Breast epithelium (tissue), 4 donors: ENCODE measurements at regions of chr1 and their contacts with region 1.

Region 1: GRCh38 chr1:175690298-175690697 is 53.1 kb downstream of the TNR start:
- DNase-seq: no peak
- H3K4me3 ChIP-seq: no peak overlapping the region
- H3K27ac ChIP-seq: no peak overlapping the region
- H3K4me1 ChIP-seq: no peaks in the 10 kb centered on the region
- H3K27me3 ChIP-seq: no peaks in the 10 kb centered on the region
- CTCF ChIP-seq: no peak
- POLR2A ChIP-seq: no peak

Region 2: DNA sequence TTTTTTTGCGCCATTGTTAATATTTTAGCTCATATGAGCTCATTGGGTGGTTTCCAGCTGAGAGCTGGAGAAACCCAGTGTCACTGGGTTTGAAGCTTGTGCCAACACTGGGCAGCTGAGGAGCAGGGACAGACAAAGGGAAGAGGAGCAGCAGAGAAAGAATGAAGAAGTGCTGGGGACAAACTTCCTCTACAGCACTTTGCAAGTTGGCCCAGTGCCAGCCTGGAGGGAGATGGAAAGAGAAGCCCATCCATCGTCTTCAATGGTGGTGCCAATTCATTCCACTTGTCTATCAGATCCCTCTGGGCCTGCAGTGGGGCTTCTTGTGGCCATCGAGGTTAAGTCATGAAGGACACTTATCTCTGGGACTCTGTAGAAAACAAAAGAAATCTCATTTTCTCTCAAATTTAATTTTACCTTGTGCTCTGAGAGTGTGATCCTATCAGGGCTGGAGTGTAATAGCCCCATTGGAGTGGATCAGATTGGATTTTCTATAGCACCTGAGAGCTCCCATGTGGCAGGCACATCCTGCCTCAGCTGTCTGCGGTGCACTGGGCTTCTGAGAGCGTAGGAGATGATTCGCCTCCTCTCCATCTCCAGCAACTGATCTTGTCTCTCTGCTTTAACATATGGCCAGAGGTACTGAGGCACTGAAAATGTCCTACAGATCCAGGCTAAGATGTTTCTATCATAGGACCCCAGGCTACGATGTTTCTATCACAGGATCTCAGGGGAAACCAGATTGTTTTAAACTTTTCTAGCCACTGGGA is 61.6 kb before region 1 on chr1:
- intact Hi-C with region 1: loop called (anchors 2 kb)
- DNase-seq: no peak
- H3K4me3 ChIP-seq: no peak overlapping the region
- H3K27ac ChIP-seq: no peak overlapping the region
- H3K4me1 ChIP-seq: no peaks in the 10 kb centered on the region
- H3K27me3 ChIP-seq: no peaks in the 10 kb centered on the region
- CTCF ChIP-seq: no peak
- POLR2A ChIP-seq: no peak